ENCODE measurements at regions of chr2 and their contacts with region 1.

Region 1: GRCh38 chr2:225889446-225889850 is 489.9 kb downstream of the NYAP2 start:
- DNase-seq: peak; percentile 73
- H3K4me3 ChIP-seq: no peak overlapping the region
- H3K27ac ChIP-seq: peak overlapping the region; percentile 45
- H3K4me1 ChIP-seq: peaks cover 4% of the 10 kb centered on the region
- H3K27me3 ChIP-seq: no peaks in the 10 kb centered on the region
- CTCF ChIP-seq: peak; percentile 60 to 80

Region 2: DNA sequence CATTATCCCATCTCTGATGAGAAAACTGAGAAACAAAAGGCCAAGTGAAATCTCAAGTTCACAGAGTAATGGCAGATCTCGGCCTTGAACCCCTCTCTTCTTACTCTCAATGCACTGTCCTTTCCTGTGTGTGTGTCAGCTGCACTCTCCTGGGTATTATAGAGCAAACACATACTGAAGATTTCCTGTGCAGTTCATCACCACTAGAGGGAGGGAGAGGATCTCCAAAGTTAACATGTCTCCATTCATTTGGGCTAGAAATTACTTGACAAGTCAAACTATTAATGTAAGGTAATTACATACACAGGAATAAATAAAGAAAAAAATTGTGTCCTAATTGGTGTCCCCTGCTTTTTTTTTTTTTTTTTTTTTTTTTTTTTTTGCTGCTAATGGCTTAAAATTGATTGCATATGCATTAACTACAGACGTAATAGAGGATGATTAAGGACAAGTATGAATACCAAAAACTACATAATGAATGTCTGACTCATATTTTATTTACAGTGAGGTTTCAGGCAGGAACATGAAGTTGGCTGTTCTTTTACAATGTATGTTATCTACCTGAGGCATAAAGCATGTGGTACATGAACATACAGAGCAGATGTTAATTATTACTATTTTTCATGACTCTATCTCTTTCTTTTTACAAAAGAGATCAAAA is 220.7 kb before region 1 on chr2:
- CTCF ChIA-PET with region 1: no interaction called
- dilution Hi-C with region 1: no loop called
- in situ Hi-C with region 1: no loop called
- intact Hi-C with region 1: loop called (anchors 10 kb)
- DNase-seq: peak; percentile 71
- H3K4me3 ChIP-seq: no peak overlapping the region
- H3K27ac ChIP-seq: peak overlapping the region; percentile 62
- H3K4me1 ChIP-seq: peaks cover 4% of the 10 kb centered on the region
- H3K27me3 ChIP-seq: no peaks in the 10 kb centered on the region
- CTCF ChIP-seq: peak; percentile 87 to 94

Region 3: GRCh38 chr2:226215902-226216503 is 326.6 kb after region 1 on chr2:
- CTCF ChIA-PET with region 1: no interaction called
- dilution Hi-C with region 1: no loop called
- in situ Hi-C with region 1: no loop called
- intact Hi-C with region 1: loop called (anchors 5 kb)
- DNase-seq: peak; percentile 21
- H3K4me3 ChIP-seq: no peak overlapping the region
- H3K27ac ChIP-seq: no peak overlapping the region
- H3K4me1 ChIP-seq: peaks cover 21% of the 10 kb centered on the region
- H3K27me3 ChIP-seq: no peaks in the 10 kb centered on the region
- CTCF ChIP-seq: peak; percentile 60 to 78

Region 4: GRCh38 chr2:226227359-226227758 is 337.9 kb after region 1 on chr2:
- CTCF ChIA-PET with region 1: no interaction called
- dilution Hi-C with region 1: no loop called
- in situ Hi-C with region 1: no loop called
- intact Hi-C with region 1: no loop called
- DNase-seq: no peak
- H3K4me3 ChIP-seq: no peak overlapping the region
- H3K27ac ChIP-seq: no peak overlapping the region
- H3K4me1 ChIP-seq: no peaks in the 10 kb centered on the region
- H3K27me3 ChIP-seq: no peaks in the 10 kb centered on the region
- CTCF ChIP-seq: no peak

Region 5: GRCh38 chr2:226622484-226622883 is 733.0 kb after region 1 on chr2:
- CTCF ChIA-PET with region 1: no interaction called
- dilution Hi-C with region 1: no loop called
- in situ Hi-C with region 1: no loop called
- intact Hi-C with region 1: loop called (anchors 5 kb)
- DNase-seq: no peak
- H3K4me3 ChIP-seq: no peak overlapping the region
- H3K27ac ChIP-seq: no peak overlapping the region
- H3K4me1 ChIP-seq: no peaks in the 10 kb centered on the region
- H3K27me3 ChIP-seq: no peaks in the 10 kb centered on the region
- CTCF ChIP-seq: peak in 1 of 2 donors; percentile 43

Measured in mammary epithelial cell (primary cell).